ENCODE measurements at regions of chr4 and their contacts with region 1.

Region 1: DNA sequence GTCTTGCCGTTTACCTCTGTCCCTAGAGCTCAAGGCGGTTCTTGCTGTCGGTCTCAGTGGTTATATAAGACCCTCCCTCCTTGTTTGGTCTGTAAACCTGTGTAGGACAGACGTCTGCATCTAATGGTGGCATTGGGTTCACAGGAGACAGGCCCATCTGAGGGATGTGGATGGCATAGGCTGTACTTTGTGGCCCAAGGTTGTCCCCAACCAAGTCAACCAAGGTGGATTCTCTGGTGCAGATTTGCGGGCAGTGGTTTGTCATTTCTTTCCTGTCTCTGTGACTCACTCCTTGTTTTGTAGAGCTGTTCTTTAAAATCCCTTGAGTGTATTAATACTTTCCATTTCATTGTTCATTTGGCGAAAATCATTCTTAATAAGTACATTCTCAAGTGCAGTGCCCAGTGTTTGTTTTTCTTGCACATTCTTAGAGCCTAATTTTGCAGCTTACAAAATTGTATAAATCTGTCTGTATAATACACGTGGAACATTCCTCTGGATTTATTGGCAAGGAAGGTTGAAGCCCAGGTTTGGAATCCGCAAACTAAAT is 68.0 kb upstream of the TLR2 start:
- DNase-seq: no peak
- H3K4me3 Mint-ChIP-seq: no peak overlapping the region
- H3K27ac Mint-ChIP-seq: no peak overlapping the region
- H3K4me1 Mint-ChIP-seq: peaks cover 17% of the 10 kb centered on the region
- H3K27me3 Mint-ChIP-seq: no peaks in the 10 kb centered on the region

Region 2: GRCh38 chr4:153418558-153418957 is 197.5 kb before region 1 on chr4:
- intact Hi-C with region 1: no loop called
- DNase-seq: no peak
- H3K4me3 Mint-ChIP-seq: no peak overlapping the region
- H3K27ac Mint-ChIP-seq: peak overlapping the region; percentile 18
- H3K4me1 Mint-ChIP-seq: peaks cover 38% of the 10 kb centered on the region
- H3K27me3 Mint-ChIP-seq: no peaks in the 10 kb centered on the region

Region 3: DNA sequence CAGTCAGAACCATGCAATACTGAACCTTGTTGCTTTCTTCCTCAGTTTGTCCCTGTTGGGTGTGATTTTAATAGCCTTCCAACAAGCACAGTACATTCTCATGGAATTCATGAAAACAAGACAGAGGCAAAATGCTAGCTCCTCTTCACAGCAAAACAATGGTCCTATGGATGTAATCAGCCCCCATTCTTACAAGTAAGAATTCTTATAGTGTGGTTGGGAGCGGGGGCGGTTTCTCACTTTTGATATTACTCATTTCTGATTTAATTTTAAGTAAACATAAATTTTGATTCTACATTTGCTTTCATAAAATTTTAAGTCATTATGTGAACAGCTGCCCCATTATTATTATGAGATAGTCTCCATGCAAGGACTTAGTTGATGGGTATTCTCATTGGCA is 12.8 kb before region 1 on chr4:
- intact Hi-C with region 1: loop called (anchors 1 kb)
- DNase-seq: no peak
- H3K4me3 Mint-ChIP-seq: no peak overlapping the region
- H3K27ac Mint-ChIP-seq: no peak overlapping the region
- H3K4me1 Mint-ChIP-seq: peaks cover 12% of the 10 kb centered on the region
- H3K27me3 Mint-ChIP-seq: no peaks in the 10 kb centered on the region